Activated CD8-positive, alpha-beta T cell treated with anti-CD3 and anti-CD28 coated beads for 36 hours (primary cell): ENCODE measurements at regions of chr14 and their contacts with region 1.

Region 1: GRCh38 chr14:56810147-56810719 is at the start of gene OTX2:
- DNase-seq: no peak
- ATAC-seq: no peak
- H3K4me3 Mint-ChIP-seq: no peak within 1 kb of the TSS
- H3K27ac Mint-ChIP-seq: no peak within 1 kb of the TSS
- H3K4me1 Mint-ChIP-seq: peaks cover 23% of the 10 kb centered on the region
- H3K27me3 Mint-ChIP-seq: peaks cover 80% of the 10 kb centered on the region
- CTCF ChIP-seq: no peak
- total RNA-seq, gene OTX2: not detected

Region 2: GRCh38 chr14:56794557-56795283 is 15.5 kb before region 1 on chr14:
- CTCF ChIA-PET with region 1: no interaction called
- POLR2A ChIA-PET with region 1: no interaction called
- intact Hi-C with region 1: loop called (anchors 2 kb)
- DNase-seq: no peak
- ATAC-seq: no peak
- H3K4me3 Mint-ChIP-seq: no peak overlapping the region
- H3K27ac Mint-ChIP-seq: no peak overlapping the region
- H3K4me1 Mint-ChIP-seq: peaks cover 11% of the 10 kb centered on the region
- H3K27me3 Mint-ChIP-seq: peaks cover 66% of the 10 kb centered on the region
- CTCF ChIP-seq: no peak

Region 3: GRCh38 chr14:56840221-56840620 is 30.0 kb after region 1 on chr14:
- CTCF ChIA-PET with region 1: no interaction called
- POLR2A ChIA-PET with region 1: no interaction called
- intact Hi-C with region 1: no loop called
- DNase-seq: no peak
- ATAC-seq: no peak
- H3K4me3 Mint-ChIP-seq: no peak overlapping the region
- H3K27ac Mint-ChIP-seq: no peak overlapping the region
- H3K4me1 Mint-ChIP-seq: no peaks in the 10 kb centered on the region
- H3K27me3 Mint-ChIP-seq: peaks cover 7% of the 10 kb centered on the region
- CTCF ChIP-seq: no peak